PC-9 (cell line): ENCODE measurements at regions of chr19 and their contacts with region 1.

Region 1: DNA sequence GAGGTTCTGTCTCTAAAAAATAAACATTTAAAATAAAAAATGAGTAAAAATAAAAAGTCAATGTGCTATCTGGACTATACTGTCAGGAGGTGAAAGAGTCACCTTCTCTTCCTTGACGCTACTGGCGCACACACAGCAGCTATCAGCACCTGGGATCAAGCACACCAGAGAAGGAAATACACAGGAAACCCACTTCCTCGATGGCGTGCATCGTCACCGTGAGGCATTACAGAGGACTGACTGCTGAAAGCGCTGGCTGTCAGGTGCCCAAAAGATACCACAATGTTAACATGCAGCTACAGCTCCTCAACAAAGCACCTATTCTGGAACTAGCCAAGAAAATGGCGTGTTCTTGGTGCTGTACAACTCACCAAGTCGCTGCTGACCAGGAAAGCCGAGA is 6.1 kb downstream of the SLC35E1 start:
- DNase-seq: no peak
- H3K4me3 ChIP-seq: no peak overlapping the region
- H3K27ac ChIP-seq: no peak overlapping the region
- H3K4me1 ChIP-seq: peaks cover 44% of the 10 kb centered on the region
- H3K27me3 ChIP-seq: no peaks in the 10 kb centered on the region
- CTCF ChIP-seq: no peak

Region 2: GRCh38 chr19:16628183-16628983 is 62.2 kb after region 1 on chr19 and contains the start of gene MED26:
- CTCF ChIA-PET with region 1: no interaction called
- POLR2A ChIA-PET with region 1: no interaction called
- intact Hi-C with region 1: loop called (anchors 1 kb)
- DNase-seq: peak; percentile 77 to 93
- H3K4me3 ChIP-seq: peak within 1 kb of the TSS; percentile 99
- H3K27ac ChIP-seq: peak within 1 kb of the TSS; percentile 53
- H3K4me1 ChIP-seq: peaks cover 20% of the 10 kb centered on the region
- H3K27me3 ChIP-seq: no peaks in the 10 kb centered on the region
- CTCF ChIP-seq: no peak
- total RNA-seq, gene MED26: 11.9 and 13.0 TPM in 2 replicates

Region 3: DNA sequence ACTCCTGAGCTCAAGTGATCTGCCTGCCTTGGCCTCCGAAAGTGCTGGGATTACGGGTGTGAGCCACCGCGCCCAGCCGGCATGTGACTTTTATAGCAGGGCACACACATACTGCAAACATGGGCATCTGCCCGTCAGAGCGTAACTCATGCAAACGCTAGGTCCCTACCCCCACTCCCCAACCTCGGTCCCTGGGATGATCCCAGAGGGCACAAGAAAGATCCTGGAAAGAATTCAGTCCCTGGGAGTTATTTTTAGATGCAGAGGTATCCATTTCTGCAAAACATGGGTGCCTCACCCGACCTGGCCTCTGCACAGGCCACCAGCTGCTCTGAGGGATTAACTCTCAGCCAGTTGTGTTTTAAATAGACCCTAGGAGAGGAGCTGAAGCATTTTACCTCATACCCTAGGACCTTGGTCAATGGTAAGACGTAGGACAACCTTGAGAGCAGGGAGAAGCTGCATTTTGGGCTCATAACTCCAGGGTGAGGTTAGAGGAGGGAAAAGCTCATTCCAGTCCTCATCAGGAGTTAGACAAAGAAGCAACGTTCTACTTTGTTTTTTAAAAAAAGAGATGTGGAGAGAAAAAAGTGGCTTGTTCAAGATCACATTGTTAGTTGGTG is 105.6 kb after region 1 on chr19:
- CTCF ChIA-PET with region 1: no interaction called
- POLR2A ChIA-PET with region 1: interaction called, 21 read pairs
- intact Hi-C with region 1: no loop called
- DNase-seq: no peak
- H3K4me3 ChIP-seq: no peak overlapping the region
- H3K27ac ChIP-seq: no peak overlapping the region
- H3K4me1 ChIP-seq: peaks cover 2% of the 10 kb centered on the region; the same call in 1 of the 2 replicates
- H3K27me3 ChIP-seq: no peaks in the 10 kb centered on the region
- CTCF ChIP-seq: no peak

Region 4: GRCh38 chr19:17021793-17022583 is 455.8 kb after region 1 on chr19:
- CTCF ChIA-PET with region 1: no interaction called
- POLR2A ChIA-PET with region 1: interaction called, 10 read pairs
- intact Hi-C with region 1: no loop called
- DNase-seq: peak; percentile 83 to 99
- H3K4me3 ChIP-seq: peak overlapping the region; percentile 29; the same call in 1 of the 2 replicates
- H3K27ac ChIP-seq: peak overlapping the region; percentile 57
- H3K4me1 ChIP-seq: peaks cover 59% of the 10 kb centered on the region
- H3K27me3 ChIP-seq: no peaks in the 10 kb centered on the region
- CTCF ChIP-seq: no peak